Natural killer cell (primary cell): ENCODE measurements at regions of chr6 and their contacts with region 1.

Region 1: GRCh38 chr6:17932330-17932852 is 55.0 kb downstream of the KIF13A start:
- DNase-seq: peak in 1 of 2 donors; percentile 35
- ATAC-seq: peak; percentile 82 to 85 (median 82)
- H3K4me3 ChIP-seq: no peak overlapping the region
- H3K4me3 Mint-ChIP-seq: peak overlapping the region; percentile 76
- H3K27ac ChIP-seq: peak overlapping the region; percentile 44
- H3K27ac Mint-ChIP-seq: peak overlapping the region; percentile 85 to 87
- H3K4me1 ChIP-seq: peaks cover 15% of the 10 kb centered on the region
- H3K4me1 Mint-ChIP-seq: peaks cover 32 to 70% of the 10 kb centered on the region in 2 donors
- H3K27me3 ChIP-seq: no peaks in the 10 kb centered on the region
- H3K27me3 Mint-ChIP-seq: no peaks in the 10 kb centered on the region
- CTCF ChIP-seq: no peak

Region 2: GRCh38 chr6:17957498-17957897 is 25.1 kb after region 1 on chr6:
- intact Hi-C with region 1: loop called (anchors 1 kb)
- DNase-seq: peak; percentile 2 to 41
- ATAC-seq: peak; percentile 88 to 95 (median 90)
- H3K4me3 ChIP-seq: no peak overlapping the region
- H3K4me3 Mint-ChIP-seq: peak overlapping the region; percentile 28
- H3K27ac ChIP-seq: peak overlapping the region; percentile 42
- H3K27ac Mint-ChIP-seq: peak overlapping the region; percentile 90 to 95
- H3K4me1 ChIP-seq: peaks cover 5% of the 10 kb centered on the region
- H3K4me1 Mint-ChIP-seq: peaks cover 34 to 35% of the 10 kb centered on the region in 2 donors
- H3K27me3 ChIP-seq: no peaks in the 10 kb centered on the region
- H3K27me3 Mint-ChIP-seq: no peaks in the 10 kb centered on the region
- CTCF ChIP-seq: no peak

Region 3: DNA sequence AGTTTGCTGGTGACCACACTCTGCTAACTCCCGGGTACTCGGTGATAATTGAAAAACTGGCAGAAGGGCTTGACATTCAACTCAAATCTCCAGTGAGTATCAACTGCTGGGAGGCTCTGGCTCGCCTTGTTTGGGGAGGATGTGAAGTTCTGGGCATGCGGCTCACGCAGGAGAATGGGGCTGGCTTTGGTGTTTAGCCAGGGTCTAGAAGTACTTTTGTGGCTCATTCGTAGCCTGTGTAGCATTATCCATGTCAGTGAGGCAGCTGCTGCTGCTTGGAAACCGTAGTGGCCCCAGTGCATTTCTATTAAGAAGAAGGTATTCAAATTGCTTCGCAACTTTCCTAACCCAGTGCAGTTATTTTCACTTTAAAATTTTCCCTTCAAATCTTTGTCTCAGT is 275.0 kb after region 1 on chr6:
- intact Hi-C with region 1: no loop called
- DNase-seq: no peak
- ATAC-seq: no peak
- H3K4me3 ChIP-seq: no peak overlapping the region
- H3K4me3 Mint-ChIP-seq: no peak overlapping the region
- H3K27ac ChIP-seq: no peak overlapping the region
- H3K27ac Mint-ChIP-seq: no peak overlapping the region
- H3K4me1 ChIP-seq: no peaks in the 10 kb centered on the region
- H3K4me1 Mint-ChIP-seq: no peaks in the 10 kb centered on the region
- H3K27me3 ChIP-seq: no peaks in the 10 kb centered on the region
- H3K27me3 Mint-ChIP-seq: no peaks in the 10 kb centered on the region
- CTCF ChIP-seq: no peak